HepG2 (cell line): ENCODE measurements at regions of chr1 and their contacts with region 1.

Region 1: DNA sequence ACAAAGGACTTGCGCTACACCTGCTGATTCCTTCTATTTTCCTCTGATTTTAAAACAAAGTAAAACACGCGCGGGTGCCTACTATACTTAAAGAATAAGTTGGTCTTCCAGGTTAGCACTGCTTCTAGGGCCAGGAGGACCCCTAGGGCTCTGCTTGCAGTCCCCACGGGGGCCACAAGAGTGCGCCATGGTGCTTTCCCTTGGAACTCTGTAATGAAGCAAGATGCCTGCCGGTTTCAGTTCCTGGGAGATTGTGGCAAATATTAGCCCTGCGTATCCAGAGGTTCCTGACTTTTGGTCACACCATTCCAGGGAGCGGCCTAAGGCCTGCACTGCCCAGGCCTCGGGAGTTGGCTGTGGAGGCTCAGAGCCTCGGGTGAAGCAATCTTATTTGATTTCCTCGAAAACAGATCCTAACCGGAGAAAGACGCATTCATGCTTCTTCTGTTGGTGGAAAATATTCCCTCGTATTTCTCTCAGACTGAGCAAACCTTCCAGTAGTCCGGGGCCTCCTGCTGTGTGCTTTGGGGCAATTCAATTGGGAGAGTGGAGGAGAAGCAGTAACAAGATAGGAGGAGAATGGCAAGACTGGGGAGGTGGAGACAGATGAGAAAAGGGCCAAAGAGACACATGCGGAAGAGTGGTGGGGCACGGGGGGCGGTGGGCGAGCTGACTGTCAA is 25.3 kb downstream of the ADAM30 start:
- DNase-seq: peak; percentile 62
- ATAC-seq: peak; percentile 97
- H3K4me3 ChIP-seq: peak overlapping the region; percentile 51 to 71 (median 65); a peak in 5 of 6 replicates
- H3K27ac ChIP-seq: no peak overlapping the region
- H3K4me1 ChIP-seq: peaks cover 8% of the 10 kb centered on the region
- H3K27me3 ChIP-seq: 0 out of 5 replicates have a peak, but pooled peaks cover 1 to 8% of the 10 kb centered on the region in 2 experiments
- CTCF ChIP-seq: peak; percentile 90
- EP300 ChIP-seq: no peak
- POLR2A ChIP-seq: no peak
- RAD21 ChIP-seq: peak; percentile 89

Region 2: DNA sequence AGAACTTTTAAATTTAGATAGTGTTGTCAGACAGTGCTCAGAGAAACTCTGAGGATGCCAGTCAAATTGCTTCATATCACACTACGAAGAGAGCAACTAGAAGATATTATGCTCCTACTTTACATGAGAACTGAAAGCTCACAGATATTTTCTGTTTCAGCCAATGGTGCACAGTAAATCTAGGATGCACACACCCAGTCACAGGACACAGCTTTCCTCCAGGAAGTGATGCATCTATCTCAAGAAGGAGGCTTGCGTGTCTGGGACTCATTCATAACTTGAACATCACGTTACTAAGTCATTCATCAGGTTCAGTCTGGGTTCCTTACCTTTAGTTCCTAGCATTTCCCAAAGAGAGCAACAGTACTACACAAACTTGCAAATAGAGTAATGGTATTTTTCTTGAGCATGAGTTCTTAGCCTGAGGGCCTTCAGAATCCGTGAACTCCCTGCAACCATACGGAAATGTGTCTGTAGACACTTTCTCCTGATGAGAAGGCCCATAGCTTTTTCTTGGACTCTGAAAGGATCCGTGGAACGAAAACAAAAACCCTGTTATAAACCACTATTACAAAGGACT is 235.2 kb before region 1 on chr1:
- CTCF ChIA-PET with region 1: no interaction called
- POLR2A ChIA-PET with region 1: no interaction called
- in situ Hi-C with region 1: no loop called
- intact Hi-C with region 1: no loop called
- DNase-seq: no peak
- ATAC-seq: no peak
- H3K4me3 ChIP-seq: no peak overlapping the region
- H3K27ac ChIP-seq: no peak overlapping the region
- H3K4me1 ChIP-seq: peaks cover 80% of the 10 kb centered on the region
- H3K27me3 ChIP-seq: no peaks in the 10 kb centered on the region
- CTCF ChIP-seq: no peak
- EP300 ChIP-seq: no peak
- POLR2A ChIP-seq: no peak
- RAD21 ChIP-seq: no peak

Region 3: DNA sequence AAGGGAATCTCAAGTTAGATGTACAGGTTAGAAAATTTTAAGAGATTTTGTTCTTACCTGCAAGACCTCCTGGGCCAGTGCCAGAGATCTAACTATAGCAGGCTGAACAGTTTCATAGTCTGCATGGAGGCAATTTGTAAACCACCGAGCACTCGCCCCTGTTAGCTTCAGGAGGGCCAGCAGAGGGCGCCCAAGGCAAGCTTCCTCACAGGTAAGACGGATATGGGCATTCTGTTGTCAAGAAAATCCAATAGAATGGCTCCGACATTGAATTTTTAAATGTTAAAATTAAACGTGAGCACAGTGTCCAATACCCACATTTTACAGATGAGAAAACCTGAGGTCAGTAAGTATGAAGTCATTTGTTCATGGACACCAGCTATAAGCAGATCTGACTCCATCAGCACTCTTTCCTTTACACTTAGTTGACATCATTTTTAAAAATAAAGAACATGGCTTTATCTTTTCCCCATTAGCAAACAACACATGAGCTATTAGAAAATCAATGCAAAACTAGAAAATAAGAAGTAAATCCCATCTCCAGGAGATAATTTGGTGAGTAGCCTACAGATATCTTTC is 62.0 kb before region 1 on chr1:
- CTCF ChIA-PET with region 1: interaction called, 9 read pairs
- POLR2A ChIA-PET with region 1: no interaction called
- in situ Hi-C with region 1: loop called (anchors 10 kb)
- intact Hi-C with region 1: loop called (anchors 2 kb)
- DNase-seq: peak; percentile 47
- ATAC-seq: peak; percentile 92
- H3K4me3 ChIP-seq: no peak overlapping the region
- H3K27ac ChIP-seq: no peak overlapping the region
- H3K4me1 ChIP-seq: peaks cover 35% of the 10 kb centered on the region
- H3K27me3 ChIP-seq: peaks cover 3 to 7% of the 10 kb centered on the region in 2 experiments; a peak in 2 of 5 replicates
- CTCF ChIP-seq: peak; percentile 85
- EP300 ChIP-seq: no peak
- POLR2A ChIP-seq: no peak
- RAD21 ChIP-seq: peak; percentile 76